ENCODE measurements at regions of chr9 and their contacts with region 1.

Region 1: GRCh38 chr9:109945573-109945972 is 165.6 kb downstream of the PALM2AKAP2 start:
- DNase-seq: no peak
- CTCF ChIP-seq: no peak

Region 2: GRCh38 chr9:109880277-109881169 is 65.0 kb before region 1 on chr9:
- CTCF ChIA-PET with region 1: no interaction called
- POLR2A ChIA-PET with region 1: no interaction called
- DNase-seq: peak; percentile 56
- CTCF ChIP-seq: peak; percentile 57

Region 3: DNA sequence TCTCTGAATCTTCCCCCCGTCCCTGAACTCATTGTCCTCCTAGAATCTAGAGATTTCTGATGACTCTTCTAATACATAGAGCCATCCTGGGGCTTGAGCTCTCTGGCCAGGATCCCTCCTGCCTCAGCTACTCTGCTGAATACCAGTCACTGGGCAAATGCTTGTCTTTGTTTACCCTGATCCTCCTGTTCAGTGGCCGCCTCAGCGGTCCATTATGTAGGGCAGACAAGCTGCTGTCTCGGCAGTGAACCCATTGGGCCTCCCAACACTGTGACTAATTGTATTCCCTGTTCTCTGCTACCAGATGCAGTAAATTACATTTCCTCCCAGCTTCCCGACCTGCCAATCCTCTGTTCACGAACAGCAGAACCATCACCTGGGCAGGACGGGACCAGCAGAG is 13.9 kb before region 1 on chr9:
- CTCF ChIA-PET with region 1: interaction called, 12 read pairs
- POLR2A ChIA-PET with region 1: no interaction called
- DNase-seq: no peak
- CTCF ChIP-seq: no peak